T-cell (primary cell): ENCODE measurements at regions of chr12 and their contacts with region 1.

Region 1: GRCh38 chr12:122064025-122064777 is 14.4 kb upstream of the MLXIP start:
- DNase-seq: peak in 13 of 35 experiments; percentile 19 to 46 (median 26)
- ATAC-seq: peak in 3 of 4 experiments; percentile 53 to 86 (median 63)
- H3K4me3 ChIP-seq: no peak overlapping the region
- H3K4me3 Mint-ChIP-seq: no peak overlapping the region
- H3K27ac ChIP-seq: no peak overlapping the region
- H3K27ac Mint-ChIP-seq: no peak overlapping the region
- H3K4me1 ChIP-seq: peaks cover 12 to 19% of the 10 kb centered on the region in 2 experiments
- H3K4me1 Mint-ChIP-seq: peaks cover 14 to 24% (median 22%) of the 10 kb centered on the region in 3 donors
- H3K27me3 ChIP-seq: no peaks in the 10 kb centered on the region
- H3K27me3 Mint-ChIP-seq: no peaks in the 10 kb centered on the region

Region 2: DNA sequence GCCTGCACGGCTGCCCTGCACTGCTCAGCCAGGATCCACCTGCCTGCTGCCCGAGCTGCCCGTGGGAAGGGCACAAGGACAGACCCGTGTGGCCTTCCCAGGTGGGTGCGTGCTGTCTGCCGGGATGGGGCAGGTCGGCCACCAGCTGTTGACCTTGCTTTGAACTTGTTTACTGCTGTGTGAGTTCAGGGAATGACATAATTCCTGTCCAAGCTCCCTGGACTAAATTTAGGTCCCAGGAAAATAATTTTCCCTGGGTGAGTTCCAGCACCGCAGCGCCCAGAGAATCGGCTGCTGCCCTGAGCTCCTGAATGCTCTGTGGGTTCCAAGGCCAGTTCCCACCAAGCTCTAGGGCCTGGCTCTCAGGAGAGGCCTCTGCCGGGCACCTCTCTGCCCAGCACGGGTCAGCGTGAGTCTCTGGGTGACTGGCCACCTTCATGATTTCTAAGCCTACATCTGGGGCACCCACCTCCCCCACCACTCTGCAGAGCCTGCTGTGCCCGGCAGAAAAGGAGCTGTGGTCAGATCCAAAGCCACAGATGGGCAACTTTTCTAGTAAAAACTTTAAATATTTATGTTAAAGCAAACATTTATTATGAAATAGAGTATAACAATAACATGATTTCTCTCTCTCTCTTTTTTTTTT is 12.8 kb before region 1 on chr12:
- CTCF ChIA-PET with region 1: no interaction called
- POLR2A ChIA-PET with region 1: interaction called in 1 of 2 experiments, 18 read pairs
- DNase-seq: no peak
- ATAC-seq: no peak
- H3K4me3 ChIP-seq: no peak overlapping the region
- H3K4me3 Mint-ChIP-seq: no peak overlapping the region
- H3K27ac ChIP-seq: no peak overlapping the region
- H3K27ac Mint-ChIP-seq: no peak overlapping the region
- H3K4me1 ChIP-seq: peaks cover 0 to 7% of the 10 kb centered on the region in 2 experiments
- H3K4me1 Mint-ChIP-seq: peaks cover 0 to 7% (median 6%) of the 10 kb centered on the region in 3 donors
- H3K27me3 ChIP-seq: no peaks in the 10 kb centered on the region
- H3K27me3 Mint-ChIP-seq: no peaks in the 10 kb centered on the region